Esophagus squamous epithelium (tissue), 5 donors: ENCODE measurements at regions of chr15 and their contacts with region 1.

Region 1: DNA sequence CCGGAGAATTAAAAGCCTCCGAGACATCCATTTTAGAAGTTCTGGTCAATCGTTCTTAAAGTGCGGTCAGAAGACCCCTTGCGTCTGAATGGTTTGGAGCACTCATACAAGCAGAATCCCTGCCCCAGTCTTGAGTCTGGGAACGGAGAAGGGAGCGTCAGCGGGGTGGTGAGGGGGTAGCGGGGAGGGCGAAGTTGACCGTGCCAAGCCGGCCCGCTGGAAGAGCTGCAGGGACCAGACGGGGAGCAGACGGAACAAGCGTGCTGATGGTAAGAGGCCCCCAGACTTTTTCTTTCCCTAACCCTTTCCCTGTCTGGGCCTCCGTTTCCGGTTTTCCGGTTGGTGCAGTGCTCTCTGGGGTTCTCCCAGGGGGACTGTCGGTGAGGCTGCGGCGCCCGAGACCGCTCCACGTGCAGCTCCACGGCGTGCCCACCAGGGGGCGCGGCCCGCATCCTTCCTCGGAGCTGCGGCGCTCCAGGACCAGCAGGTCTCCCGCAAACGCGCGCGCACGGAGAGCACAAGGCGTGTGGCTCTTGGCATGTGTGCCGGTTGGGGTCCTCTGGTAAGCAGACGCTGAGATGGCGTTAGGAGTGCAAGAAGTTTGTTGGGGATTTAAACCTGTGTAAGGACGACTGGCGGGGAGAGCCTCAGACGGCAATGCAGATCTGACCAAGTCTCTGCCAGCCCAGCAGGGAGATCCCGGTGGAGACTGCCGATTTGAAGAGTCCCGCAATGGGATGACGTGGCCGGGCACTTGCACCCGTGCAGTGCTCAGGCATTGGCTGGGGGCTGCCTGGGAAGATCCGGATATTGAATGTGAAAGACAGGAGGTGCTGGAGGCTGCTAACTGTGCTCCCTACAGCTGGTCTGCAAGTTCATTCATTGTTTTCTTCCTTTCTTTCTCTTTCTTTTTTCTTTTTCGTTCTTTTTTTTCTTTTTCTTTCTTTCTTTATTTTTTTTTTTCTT is 19.2 kb upstream of the CORO2B start:
- DNase-seq: no peak
- H3K4me3 ChIP-seq: peak overlapping the region; percentile 13 to 64 (median 42)
- H3K27ac ChIP-seq: no peak overlapping the region
- H3K4me1 ChIP-seq: peaks cover 12 to 17% (median 14%) of the 10 kb centered on the region in 3 donors
- H3K27me3 ChIP-seq: peaks cover 0 to 71% (median 0%) of the 10 kb centered on the region in 4 donors
- CTCF ChIP-seq: peak; percentile 90 to 97 (median 96)
- POLR2A ChIP-seq: no peak

Region 2: GRCh38 chr15:68316061-68316804 is 243.4 kb before region 1 on chr15:
- intact Hi-C with region 1: loop called (anchors 10 kb)
- DNase-seq: no peak
- H3K4me3 ChIP-seq: no peak overlapping the region
- H3K27ac ChIP-seq: no peak overlapping the region
- H3K4me1 ChIP-seq: peaks cover 0 to 10% (median 0%) of the 10 kb centered on the region in 3 donors
- H3K27me3 ChIP-seq: peaks cover 0 to 31% (median 0%) of the 10 kb centered on the region in 4 donors
- CTCF ChIP-seq: peak in 1 of 6 experiments; percentile 10
- POLR2A ChIP-seq: no peak

Region 3: DNA sequence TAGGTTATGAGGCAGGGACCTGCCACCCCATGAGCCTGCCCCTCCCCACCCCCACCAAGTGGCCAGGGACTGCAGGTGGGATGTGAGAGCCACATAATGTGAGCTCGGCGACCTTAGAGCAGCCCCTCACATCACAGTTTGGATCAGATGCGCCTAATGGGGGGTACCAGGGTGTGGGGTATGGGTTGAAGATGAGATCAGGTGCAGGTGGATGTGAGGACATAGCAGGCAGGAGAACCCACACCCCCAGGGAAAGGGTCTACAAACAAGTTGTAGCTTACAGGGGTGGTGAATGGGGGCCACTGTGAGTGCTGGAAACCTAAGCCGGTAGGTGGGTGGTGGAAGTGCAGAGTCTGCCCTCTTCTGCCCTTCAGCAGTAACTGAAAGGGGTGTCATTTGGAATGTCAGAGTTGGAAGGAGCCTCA is 113.2 kb after region 1 on chr15:
- intact Hi-C with region 1: loop called (anchors 2 kb)
- DNase-seq: no peak
- H3K4me3 ChIP-seq: no peak overlapping the region
- H3K27ac ChIP-seq: no peak overlapping the region
- H3K4me1 ChIP-seq: peaks cover 0 to 12% (median 0%) of the 10 kb centered on the region in 3 donors
- H3K27me3 ChIP-seq: peaks cover 0 to 23% (median 0%) of the 10 kb centered on the region in 4 donors
- CTCF ChIP-seq: no peak
- POLR2A ChIP-seq: no peak